CD8-positive, alpha-beta T cell (primary cell): ENCODE measurements at regions of chr10 and their contacts with region 1.

Region 1: DNA sequence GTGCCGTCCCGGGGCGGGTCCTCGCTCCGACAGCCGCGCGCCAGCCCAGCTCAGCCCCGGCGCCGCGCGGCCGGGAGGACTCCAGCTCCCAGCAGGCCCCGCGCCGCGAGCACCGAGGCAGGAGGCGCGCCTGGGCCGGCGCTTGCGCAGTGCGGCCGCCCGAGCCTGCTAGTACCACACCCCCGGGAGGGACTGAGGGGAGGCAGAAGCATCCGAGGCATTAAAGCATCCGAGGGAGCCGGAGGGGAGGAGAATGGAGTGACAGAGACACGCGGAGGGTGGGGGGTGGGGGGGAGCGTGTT is at the start of gene GRK5:
- DNase-seq: peak; percentile 90 to 99 (median 96)
- ATAC-seq: peak; percentile 81
- H3K4me3 ChIP-seq: peak within 1 kb of the TSS; percentile 62 to 77
- H3K4me3 Mint-ChIP-seq: peak within 1 kb of the TSS; percentile 99
- H3K27ac ChIP-seq: peak within 1 kb of the TSS; percentile 57 to 74
- H3K27ac Mint-ChIP-seq: peak within 1 kb of the TSS; percentile 95
- H3K4me1 ChIP-seq: peaks cover 36% of the 10 kb centered on the region
- H3K4me1 Mint-ChIP-seq: peaks cover 44% of the 10 kb centered on the region
- H3K27me3 ChIP-seq: no peaks in the 10 kb centered on the region
- H3K27me3 Mint-ChIP-seq: no peaks in the 10 kb centered on the region
- CTCF ChIP-seq: no peak
- total RNA-seq, gene GRK5: 15.6 to 16.2 TPM

Region 2: GRCh38 chr10:119217991-119218490 is 10.7 kb after region 1 on chr10:
- CTCF ChIA-PET with region 1: interaction called, 24 read pairs
- POLR2A ChIA-PET with region 1: interaction called, 3 read pairs
- intact Hi-C with region 1: no loop called
- DNase-seq: no peak
- ATAC-seq: no peak
- H3K4me3 ChIP-seq: no peak overlapping the region
- H3K4me3 Mint-ChIP-seq: no peak overlapping the region
- H3K27ac ChIP-seq: no peak overlapping the region
- H3K27ac Mint-ChIP-seq: no peak overlapping the region
- H3K4me1 ChIP-seq: peaks cover 15% of the 10 kb centered on the region
- H3K4me1 Mint-ChIP-seq: peaks cover 28% of the 10 kb centered on the region
- H3K27me3 ChIP-seq: no peaks in the 10 kb centered on the region
- H3K27me3 Mint-ChIP-seq: no peaks in the 10 kb centered on the region
- CTCF ChIP-seq: no peak

Region 3: DNA sequence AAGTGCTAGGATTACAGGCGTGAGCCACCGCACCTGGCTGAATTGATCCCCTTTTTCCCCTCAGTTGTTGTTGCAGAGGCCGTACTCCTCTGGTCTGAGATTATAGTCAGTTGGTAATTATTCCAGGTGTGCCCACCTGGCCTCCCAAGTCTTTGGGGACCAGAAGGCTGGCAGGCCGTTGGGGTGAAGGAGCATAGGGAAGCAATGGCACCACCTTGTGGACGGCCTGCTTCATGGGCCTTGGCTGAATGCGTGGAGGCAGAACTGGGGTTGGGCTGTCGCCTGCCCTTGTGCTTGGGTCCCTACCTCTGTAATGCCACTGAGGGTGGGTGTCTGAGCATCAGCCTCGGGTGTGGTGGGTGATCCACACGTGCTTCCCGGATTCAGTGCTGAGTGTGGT is 209.5 kb after region 1 on chr10:
- CTCF ChIA-PET with region 1: interaction called, 86 read pairs
- POLR2A ChIA-PET with region 1: interaction called, 9 read pairs
- intact Hi-C with region 1: loop called (anchors 1 kb)
- DNase-seq: peak; percentile 45 to 83 (median 73)
- ATAC-seq: peak; percentile 86
- H3K4me3 ChIP-seq: no peak overlapping the region
- H3K4me3 Mint-ChIP-seq: no peak overlapping the region
- H3K27ac ChIP-seq: no peak overlapping the region
- H3K27ac Mint-ChIP-seq: no peak overlapping the region
- H3K4me1 ChIP-seq: no peaks in the 10 kb centered on the region
- H3K4me1 Mint-ChIP-seq: peaks cover 2% of the 10 kb centered on the region
- H3K27me3 ChIP-seq: no peaks in the 10 kb centered on the region
- H3K27me3 Mint-ChIP-seq: no peaks in the 10 kb centered on the region
- CTCF ChIP-seq: peak; percentile 60

Region 4: GRCh38 chr10:119478111-119478802 is 270.9 kb after region 1 on chr10:
- CTCF ChIA-PET with region 1: no interaction called
- POLR2A ChIA-PET with region 1: no interaction called
- intact Hi-C with region 1: no loop called
- DNase-seq: peak in 5 of 9 experiments; percentile 18 to 63 (median 39)
- ATAC-seq: peak; percentile 75
- H3K4me3 ChIP-seq: no peak overlapping the region
- H3K4me3 Mint-ChIP-seq: peak overlapping the region; percentile 70
- H3K27ac ChIP-seq: no peak overlapping the region
- H3K27ac Mint-ChIP-seq: peak overlapping the region; percentile 84
- H3K4me1 ChIP-seq: peaks cover 23% of the 10 kb centered on the region
- H3K4me1 Mint-ChIP-seq: peaks cover 27% of the 10 kb centered on the region
- H3K27me3 ChIP-seq: no peaks in the 10 kb centered on the region
- H3K27me3 Mint-ChIP-seq: no peaks in the 10 kb centered on the region
- CTCF ChIP-seq: no peak

Region 5: DNA sequence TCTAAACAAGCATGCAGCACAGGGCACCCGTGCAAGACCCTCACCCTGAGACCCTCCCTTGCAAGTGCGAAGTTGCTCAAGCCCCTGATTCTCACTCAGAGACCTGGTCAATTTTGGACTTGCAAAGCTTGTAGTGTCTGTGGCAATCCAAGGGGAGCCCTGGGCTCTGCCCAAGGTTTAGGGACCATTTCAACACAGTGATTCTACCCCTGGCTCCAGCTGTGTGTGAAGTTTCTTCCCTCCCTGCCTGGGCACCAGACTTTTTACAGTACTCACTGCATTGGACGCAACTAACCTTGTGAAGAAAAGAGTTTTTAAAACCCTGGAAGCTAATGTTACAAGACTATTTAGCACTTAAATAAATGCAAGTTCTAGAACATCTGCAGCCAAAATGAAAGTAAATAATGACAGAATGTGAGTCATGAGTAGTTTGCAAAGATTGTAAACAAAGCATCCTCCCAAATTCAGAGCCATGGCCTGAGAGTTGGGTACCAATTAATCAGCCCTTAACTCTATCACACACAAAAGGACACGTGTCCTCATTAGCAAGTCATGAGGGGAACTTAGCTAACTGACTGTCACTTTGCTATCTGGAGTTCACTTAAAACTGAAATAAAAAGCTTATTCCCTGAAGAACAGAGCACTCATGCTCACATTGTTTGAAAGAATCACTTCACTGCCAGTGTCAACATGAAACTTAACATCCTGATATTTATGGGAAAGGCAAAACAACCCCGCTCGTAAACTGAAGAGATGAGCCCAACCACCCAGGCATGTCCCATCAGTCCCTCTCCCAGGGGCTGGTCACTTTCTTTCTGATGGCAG is 287.1 kb after region 1 on chr10:
- CTCF ChIA-PET with region 1: interaction called, 5 read pairs
- POLR2A ChIA-PET with region 1: interaction called, 5 read pairs
- intact Hi-C with region 1: loop called (anchors 1 to 5 kb)
- DNase-seq: no peak
- ATAC-seq: peak; percentile 16
- H3K4me3 ChIP-seq: no peak overlapping the region
- H3K4me3 Mint-ChIP-seq: peak overlapping the region; percentile 44
- H3K27ac ChIP-seq: peak overlapping the region in 1 of 2 experiments; percentile 40
- H3K27ac Mint-ChIP-seq: peak overlapping the region; percentile 93
- H3K4me1 ChIP-seq: peaks cover 87% of the 10 kb centered on the region
- H3K4me1 Mint-ChIP-seq: peaks cover 74% of the 10 kb centered on the region
- H3K27me3 ChIP-seq: no peaks in the 10 kb centered on the region
- H3K27me3 Mint-ChIP-seq: no peaks in the 10 kb centered on the region
- CTCF ChIP-seq: no peak

Region 6: GRCh38 chr10:119650692-119651513 is 443.6 kb after region 1 on chr10 and contains the start of gene BAG3:
- CTCF ChIA-PET with region 1: no interaction called
- POLR2A ChIA-PET with region 1: no interaction called
- intact Hi-C with region 1: loop called in 1 of 2 experiments (anchors 1 kb)
- DNase-seq: peak; percentile 57 to 88 (median 76)
- ATAC-seq: peak; percentile 76
- H3K4me3 ChIP-seq: peak within 1 kb of the TSS; percentile 94 to 95
- H3K4me3 Mint-ChIP-seq: peak within 1 kb of the TSS; percentile 98
- H3K27ac ChIP-seq: peak within 1 kb of the TSS; percentile 78 to 88
- H3K27ac Mint-ChIP-seq: peak within 1 kb of the TSS; percentile 95
- H3K4me1 ChIP-seq: peaks cover 36% of the 10 kb centered on the region
- H3K4me1 Mint-ChIP-seq: peaks cover 44% of the 10 kb centered on the region
- H3K27me3 ChIP-seq: no peaks in the 10 kb centered on the region
- H3K27me3 Mint-ChIP-seq: no peaks in the 10 kb centered on the region
- CTCF ChIP-seq: no peak
- total RNA-seq, gene BAG3: 20.6 to 21.8 TPM

Region 7: GRCh38 chr10:119713744-119714483 is 506.6 kb after region 1 on chr10:
- CTCF ChIA-PET with region 1: no interaction called
- POLR2A ChIA-PET with region 1: no interaction called
- intact Hi-C with region 1: no loop called
- DNase-seq: no peak
- ATAC-seq: no peak
- H3K4me3 ChIP-seq: no peak overlapping the region
- H3K4me3 Mint-ChIP-seq: no peak overlapping the region
- H3K27ac ChIP-seq: no peak overlapping the region
- H3K27ac Mint-ChIP-seq: no peak overlapping the region
- H3K4me1 ChIP-seq: no peaks in the 10 kb centered on the region
- H3K4me1 Mint-ChIP-seq: no peaks in the 10 kb centered on the region
- H3K27me3 ChIP-seq: no peaks in the 10 kb centered on the region
- H3K27me3 Mint-ChIP-seq: no peaks in the 10 kb centered on the region
- CTCF ChIP-seq: no peak

Region 8: DNA sequence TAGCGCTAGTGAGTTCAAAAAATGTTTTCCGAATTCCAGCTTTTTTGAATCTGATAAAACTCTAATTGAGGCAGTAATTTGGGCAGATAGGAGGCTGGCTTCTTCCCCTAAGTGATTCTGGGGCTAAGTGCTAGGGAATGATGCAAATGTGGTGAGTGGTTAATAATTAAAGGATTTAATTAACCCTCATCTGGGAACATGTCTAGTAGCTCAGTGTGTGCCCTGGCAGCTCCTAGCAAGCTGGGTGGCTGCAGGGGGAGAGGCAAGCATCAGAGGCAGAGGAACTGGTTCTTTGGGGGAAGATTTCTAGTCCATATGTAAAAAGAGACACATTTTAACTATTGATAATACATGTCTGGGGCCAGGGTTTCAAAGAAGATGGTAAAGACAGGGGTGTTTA is 1998.3 kb after region 1 on chr10:
- CTCF ChIA-PET with region 1: no interaction called
- POLR2A ChIA-PET with region 1: no interaction called
- intact Hi-C with region 1: no loop called
- DNase-seq: no peak
- ATAC-seq: no peak
- H3K4me3 ChIP-seq: no peak overlapping the region
- H3K4me3 Mint-ChIP-seq: no peak overlapping the region
- H3K27ac ChIP-seq: no peak overlapping the region
- H3K27ac Mint-ChIP-seq: no peak overlapping the region
- H3K4me1 ChIP-seq: no peaks in the 10 kb centered on the region
- H3K4me1 Mint-ChIP-seq: no peaks in the 10 kb centered on the region
- H3K27me3 ChIP-seq: no peaks in the 10 kb centered on the region
- H3K27me3 Mint-ChIP-seq: no peaks in the 10 kb centered on the region
- CTCF ChIP-seq: no peak